Endothelial cell of umbilical vein (primary cell): ENCODE measurements at regions of chr4 and their contacts with region 1.

Region 1: DNA sequence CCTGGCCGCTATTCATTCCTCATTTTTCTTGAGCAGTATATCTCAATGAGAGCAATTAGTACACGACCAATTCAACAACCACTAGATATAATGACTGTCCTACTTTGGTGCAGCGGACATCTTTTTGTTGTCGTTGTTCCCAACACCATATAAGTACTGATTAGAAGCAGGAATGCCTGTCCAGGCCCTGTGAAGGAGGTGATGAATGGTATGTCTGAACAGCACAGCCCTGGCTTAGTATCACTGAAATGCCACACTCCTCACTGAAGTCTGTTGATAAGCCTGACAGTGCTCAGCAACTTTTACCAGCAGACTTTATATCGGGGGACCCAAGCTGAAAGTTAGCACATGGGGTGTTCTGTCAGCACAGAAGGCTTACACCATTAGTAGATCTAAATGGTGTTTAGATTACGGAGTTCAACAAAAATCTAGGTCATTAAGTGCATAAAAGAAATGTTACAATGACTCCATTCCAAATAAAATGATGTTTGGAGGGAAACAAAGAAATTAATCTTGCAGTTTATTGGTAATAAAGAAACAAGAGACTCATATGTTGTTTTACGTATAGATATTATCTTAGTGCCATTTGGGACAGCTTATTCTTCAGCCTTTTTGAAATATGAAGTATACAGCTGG is 228.3 kb upstream of the TTC29 start:
- DNase-seq: no peak
- H3K4me3 ChIP-seq: no peak overlapping the region
- H3K27ac ChIP-seq: no peak overlapping the region
- H3K4me1 ChIP-seq: no peaks in the 10 kb centered on the region
- H3K27me3 ChIP-seq: no peaks in the 10 kb centered on the region
- CTCF ChIP-seq: no peak
- POLR2A ChIP-seq: no peak

Region 2: GRCh38 chr4:147160908-147161513 is 12.9 kb before region 1 on chr4:
- CTCF ChIA-PET with region 1: interaction called, 29 read pairs
- POLR2A ChIA-PET with region 1: no interaction called
- dilution Hi-C with region 1: no loop called
- intact Hi-C with region 1: no loop called
- DNase-seq: peak; percentile 53
- H3K4me3 ChIP-seq: no peak overlapping the region
- H3K27ac ChIP-seq: no peak overlapping the region
- H3K4me1 ChIP-seq: peaks cover 4% of the 10 kb centered on the region
- H3K27me3 ChIP-seq: peaks cover 0 to 14% of the 10 kb centered on the region in 2 experiments
- CTCF ChIP-seq: peak; percentile 65 to 71
- POLR2A ChIP-seq: no peak